PC-3 (cell line): ENCODE measurements at regions of chr22 and their contacts with region 1.

Region 1: DNA sequence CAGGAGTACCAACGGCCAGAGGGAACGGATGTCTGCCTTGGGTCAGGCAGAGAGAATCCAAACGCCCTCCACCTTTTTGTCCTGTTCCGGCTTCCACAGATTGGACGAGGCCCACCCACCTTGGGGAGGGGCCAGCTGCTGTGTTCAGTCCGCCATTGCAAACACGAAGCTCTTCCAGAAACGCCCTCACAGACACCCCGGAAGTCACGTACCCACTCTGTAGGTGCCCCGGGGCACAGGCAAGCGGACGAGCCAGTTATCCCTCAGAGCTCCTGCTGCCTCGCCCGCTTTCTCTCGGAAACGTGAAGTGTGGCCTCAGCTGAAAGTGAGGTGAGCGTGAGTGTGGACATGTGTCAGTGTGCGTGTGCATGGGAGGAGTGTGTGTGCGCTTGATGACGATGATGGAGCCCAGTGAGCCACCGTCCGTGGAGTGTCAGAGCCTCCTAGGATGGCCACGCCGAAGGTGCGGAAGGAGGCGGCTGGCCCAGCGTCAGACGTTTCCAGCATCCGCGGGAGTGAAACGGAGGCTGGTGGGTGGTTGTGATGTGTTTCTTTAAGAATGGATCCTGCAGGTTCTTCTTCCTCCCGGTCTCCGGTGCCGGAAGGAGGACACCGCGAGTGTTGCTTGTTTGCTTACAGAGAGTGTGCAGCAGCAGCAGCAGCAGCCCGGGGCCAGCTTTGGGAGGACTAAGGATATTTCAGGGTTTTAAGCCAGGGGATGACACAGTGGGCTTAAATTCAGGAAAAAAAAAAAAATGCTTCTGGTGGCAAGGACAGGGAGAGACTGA is 869.3 kb downstream of the TBC1D22A start:
- DNase-seq: peak; percentile 91
- ATAC-seq: peak; percentile 75
- H3K4me3 ChIP-seq: peak overlapping the region; percentile 97
- H3K27ac ChIP-seq: peak overlapping the region; percentile 77
- H3K4me1 ChIP-seq: peaks cover 29% of the 10 kb centered on the region
- H3K27me3 ChIP-seq: no peaks in the 10 kb centered on the region
- CTCF ChIP-seq: no peak

Region 2: GRCh38 chr22:47612311-47612910 is 19.3 kb before region 1 on chr22:
- CTCF ChIA-PET with region 1: no interaction called
- POLR2A ChIA-PET with region 1: no interaction called
- intact Hi-C with region 1: no loop called
- DNase-seq: no peak
- ATAC-seq: no peak
- H3K4me3 ChIP-seq: no peak overlapping the region
- H3K27ac ChIP-seq: no peak overlapping the region
- H3K4me1 ChIP-seq: no peaks in the 10 kb centered on the region
- H3K27me3 ChIP-seq: peaks cover 5% of the 10 kb centered on the region; the same call in 1 of the 2 replicates
- CTCF ChIP-seq: no peak

Region 3: GRCh38 chr22:47645450-47645914 is 13.7 kb after region 1 on chr22:
- CTCF ChIA-PET with region 1: no interaction called
- POLR2A ChIA-PET with region 1: no interaction called
- intact Hi-C with region 1: no loop called
- DNase-seq: peak; percentile 13
- ATAC-seq: no peak
- H3K4me3 ChIP-seq: no peak overlapping the region
- H3K27ac ChIP-seq: no peak overlapping the region
- H3K4me1 ChIP-seq: peaks cover 6% of the 10 kb centered on the region
- H3K27me3 ChIP-seq: no peaks in the 10 kb centered on the region
- CTCF ChIP-seq: no peak

Region 4: GRCh38 chr22:47837703-47838102 is 206.0 kb after region 1 on chr22:
- CTCF ChIA-PET with region 1: no interaction called
- POLR2A ChIA-PET with region 1: no interaction called
- intact Hi-C with region 1: loop called (anchors 5 kb)
- DNase-seq: peak; percentile 54
- ATAC-seq: no peak
- H3K4me3 ChIP-seq: no peak overlapping the region
- H3K27ac ChIP-seq: 0 out of 2 replicates have a peak overlapping the region, but pooled peaks have one; percentile 26
- H3K4me1 ChIP-seq: peaks cover 25% of the 10 kb centered on the region
- H3K27me3 ChIP-seq: no peaks in the 10 kb centered on the region
- CTCF ChIP-seq: peak; percentile 67